ENCODE measurements at regions of chr5 and their contacts with region 1.

Region 1: DNA sequence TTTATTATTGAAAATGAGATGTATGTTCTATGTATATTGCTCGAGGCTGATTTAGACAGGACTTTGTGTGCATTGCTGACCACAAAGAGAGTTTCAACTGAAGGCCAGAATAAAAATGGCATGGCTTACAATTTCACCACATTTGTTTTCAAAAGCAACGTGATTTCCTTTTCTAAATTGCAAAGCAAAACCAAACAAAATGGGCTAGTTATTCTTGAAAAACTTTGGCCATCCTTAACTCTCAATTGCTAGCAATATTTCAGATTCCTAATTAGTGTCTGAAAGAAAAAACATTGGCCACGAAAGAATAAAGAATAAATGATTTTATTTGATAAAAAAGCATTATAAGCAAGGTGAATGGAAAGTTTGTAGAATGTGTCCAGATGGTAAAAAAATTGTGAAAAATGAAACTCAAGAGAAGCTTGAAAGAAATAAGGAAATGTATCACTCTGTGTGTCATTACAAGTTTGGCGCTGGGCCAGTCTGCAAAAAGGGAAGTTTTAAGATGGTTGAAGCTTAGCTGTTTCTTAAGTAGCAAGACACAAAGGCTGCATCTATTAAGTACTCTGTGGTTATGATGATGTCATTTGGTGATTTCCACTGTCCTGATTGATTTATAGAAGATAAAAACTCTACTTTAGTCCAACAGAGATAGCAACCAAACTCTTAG is 89.2 kb upstream of the PRLR start:
- DNase-seq: peak; percentile 44
- ATAC-seq: peak; percentile 96
- H3K4me3 Mint-ChIP-seq: peak overlapping the region; percentile 64
- H3K27ac Mint-ChIP-seq: peak overlapping the region; percentile 87
- H3K4me1 Mint-ChIP-seq: peaks cover 16% of the 10 kb centered on the region
- H3K27me3 Mint-ChIP-seq: no peaks in the 10 kb centered on the region
- CTCF ChIP-seq: no peak

Region 2: DNA sequence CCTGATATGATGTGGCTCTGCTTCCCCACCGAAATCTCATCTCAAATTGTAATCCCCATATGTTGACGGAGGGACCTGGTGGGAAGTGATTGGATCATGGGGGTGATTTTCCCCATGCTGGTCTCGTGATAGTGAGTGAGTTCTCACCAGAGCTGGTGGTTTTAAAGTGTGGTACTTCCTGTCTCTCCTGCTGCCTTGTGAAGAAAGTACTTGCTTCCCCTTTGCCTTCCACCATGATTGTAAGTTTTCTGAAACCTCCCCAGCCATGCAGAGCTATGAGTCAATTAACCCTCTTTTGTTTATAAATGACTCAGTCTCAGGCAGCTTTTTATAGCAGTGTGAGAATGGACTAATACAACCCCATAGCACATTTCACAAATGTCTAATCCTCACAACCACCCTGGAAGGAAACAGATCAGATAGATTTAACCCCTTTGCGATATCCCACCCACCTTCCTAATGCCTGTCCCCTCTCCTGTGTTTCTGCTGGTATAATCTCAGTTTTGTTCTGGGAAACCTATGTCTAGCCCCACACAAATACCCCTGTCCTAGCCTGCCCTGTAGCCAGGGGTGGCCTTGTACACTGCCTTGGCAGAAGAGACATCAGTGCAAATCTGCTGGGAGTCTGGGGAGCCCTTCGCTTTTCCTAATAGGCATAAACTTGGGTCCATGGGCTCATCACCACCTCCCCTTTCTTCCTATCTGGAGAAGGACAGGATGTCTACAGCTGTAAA is 820.3 kb before region 1 on chr5:
- CTCF ChIA-PET with region 1: no interaction called
- POLR2A ChIA-PET with region 1: no interaction called
- intact Hi-C with region 1: loop called (anchors 5 kb)
- DNase-seq: no peak
- ATAC-seq: peak; percentile 87
- H3K4me3 Mint-ChIP-seq: peak overlapping the region; percentile 48
- H3K27ac Mint-ChIP-seq: peak overlapping the region; percentile 79
- H3K4me1 Mint-ChIP-seq: peaks cover 21% of the 10 kb centered on the region
- H3K27me3 Mint-ChIP-seq: peaks cover 4% of the 10 kb centered on the region
- CTCF ChIP-seq: no peak

Region 3: DNA sequence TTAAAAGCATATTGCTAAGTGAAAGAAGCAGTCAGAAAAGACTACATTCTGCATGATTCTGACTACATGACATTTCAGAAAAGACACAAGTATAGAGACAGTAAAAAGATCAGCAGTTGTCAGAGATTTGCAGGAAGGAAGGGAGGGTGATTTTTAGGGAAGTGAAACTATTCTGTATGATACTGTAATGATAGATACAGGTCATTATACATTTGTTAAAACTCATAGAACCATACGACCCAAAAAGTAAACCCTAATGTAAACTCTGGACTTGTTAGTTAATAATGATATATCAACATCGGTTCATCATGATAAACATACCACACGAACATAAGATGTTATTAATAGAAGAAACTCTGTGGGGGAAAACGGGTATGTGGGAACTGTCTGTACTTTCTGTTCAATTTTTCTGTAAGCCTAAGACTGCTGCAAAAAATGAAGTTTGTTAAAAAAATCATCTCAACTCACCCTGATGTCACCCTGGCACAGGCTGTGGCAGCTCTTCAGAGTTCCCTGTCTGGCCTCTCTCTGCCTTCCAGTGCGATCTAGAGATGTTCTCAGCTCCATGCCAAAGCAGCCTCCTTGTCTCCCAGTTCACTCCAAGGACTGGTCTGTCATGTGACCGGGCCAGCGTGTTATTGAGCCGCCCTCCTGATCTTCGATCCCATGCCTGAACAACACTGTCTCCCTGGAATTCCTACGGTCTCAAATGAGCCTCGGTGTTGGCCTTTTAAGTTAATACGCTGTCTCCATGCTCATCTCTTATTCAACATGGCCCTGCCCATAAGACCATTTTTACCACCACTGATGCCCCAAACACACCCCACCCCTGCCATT is 124.6 kb before region 1 on chr5:
- CTCF ChIA-PET with region 1: no interaction called
- POLR2A ChIA-PET with region 1: interaction called, 3 read pairs
- intact Hi-C with region 1: loop called (anchors 1 kb)
- DNase-seq: no peak
- ATAC-seq: peak; percentile 95
- H3K4me3 Mint-ChIP-seq: peak overlapping the region; percentile 62
- H3K27ac Mint-ChIP-seq: peak overlapping the region; percentile 84
- H3K4me1 Mint-ChIP-seq: peaks cover 37% of the 10 kb centered on the region
- H3K27me3 Mint-ChIP-seq: no peaks in the 10 kb centered on the region
- CTCF ChIP-seq: no peak

Region 4: DNA sequence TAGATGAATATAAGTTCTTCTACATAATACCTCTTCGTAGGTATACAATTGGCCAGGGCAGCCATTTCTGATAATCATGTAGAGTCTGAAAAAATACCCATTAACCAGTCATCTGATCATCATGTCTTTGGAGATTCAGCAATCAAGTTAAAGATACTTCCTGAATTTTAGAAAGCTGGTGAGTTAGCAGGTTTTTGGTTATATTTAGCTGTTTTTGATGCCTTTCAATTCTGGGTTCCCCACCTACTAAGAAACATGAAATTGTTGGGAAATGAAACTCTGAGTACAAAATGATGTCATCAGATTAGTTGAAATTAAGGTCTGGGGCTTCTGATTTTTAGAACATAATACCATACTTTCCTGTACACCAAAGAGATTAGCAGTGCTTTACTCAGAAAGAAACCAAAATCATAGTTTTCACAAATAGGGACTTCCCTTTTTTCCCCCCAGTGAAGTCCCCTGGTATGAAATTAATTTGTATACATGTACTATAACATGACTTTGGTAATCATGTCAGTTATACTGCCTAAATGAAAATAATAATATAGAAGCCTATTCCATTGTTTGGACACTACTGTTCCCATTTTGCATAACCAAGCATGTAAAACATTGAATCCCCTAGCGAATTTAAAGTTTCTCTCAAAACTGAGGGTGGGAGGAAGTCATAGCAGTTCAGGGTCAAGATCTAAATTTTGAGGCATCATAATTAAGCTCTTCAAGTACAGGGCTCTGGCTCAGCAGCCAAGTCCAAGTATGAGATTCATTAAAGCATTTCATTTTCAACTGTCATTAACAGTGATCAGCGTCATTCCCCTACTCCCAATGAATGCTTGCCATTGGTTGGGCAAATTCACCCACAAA is 107.1 kb before region 1 on chr5:
- CTCF ChIA-PET with region 1: interaction called, 3 read pairs
- POLR2A ChIA-PET with region 1: interaction called, 6 read pairs
- intact Hi-C with region 1: loop called (anchors 1 kb)
- DNase-seq: no peak
- ATAC-seq: peak; percentile 86
- H3K4me3 Mint-ChIP-seq: peak overlapping the region; percentile 22
- H3K27ac Mint-ChIP-seq: peak overlapping the region; percentile 92
- H3K4me1 Mint-ChIP-seq: peaks cover 26% of the 10 kb centered on the region
- H3K27me3 Mint-ChIP-seq: peaks cover 2% of the 10 kb centered on the region
- CTCF ChIP-seq: no peak

Region 5: DNA sequence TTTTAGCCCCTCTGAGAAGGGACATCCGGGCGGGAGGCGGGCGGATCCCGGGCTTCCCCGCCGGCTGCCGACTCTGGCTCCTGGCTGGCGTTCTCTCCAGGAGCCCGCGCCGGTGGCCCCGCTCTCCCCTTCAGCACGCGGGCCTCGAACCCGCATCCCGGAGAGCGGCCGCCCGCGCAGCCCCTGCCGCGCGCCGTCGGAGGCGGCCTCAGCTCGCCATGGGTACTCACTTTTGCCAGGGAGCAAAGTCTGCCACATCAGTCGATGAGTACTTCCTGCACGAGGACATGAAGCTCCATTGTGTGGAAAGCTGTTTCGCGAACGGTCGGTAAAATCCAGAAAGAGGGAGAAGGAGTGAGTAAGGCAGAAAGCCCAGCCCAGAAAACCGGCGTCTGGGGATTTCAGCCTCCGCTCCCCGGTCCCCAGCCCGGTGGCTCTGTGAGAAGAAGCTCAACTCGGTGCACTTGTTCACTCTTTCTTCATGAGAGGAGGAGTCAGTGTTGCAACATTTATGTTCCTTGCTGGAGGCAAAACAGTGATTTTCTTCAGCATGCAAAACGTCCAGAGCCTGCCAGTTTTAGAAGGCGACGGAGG is 89.3 kb before region 1 on chr5 and contains the start of gene PRLR:
- CTCF ChIA-PET with region 1: no interaction called
- POLR2A ChIA-PET with region 1: interaction called, 14 read pairs
- intact Hi-C with region 1: loop called (anchors 1 kb)
- DNase-seq: no peak
- ATAC-seq: peak; percentile 35
- H3K4me3 Mint-ChIP-seq: peak within 1 kb of the TSS; percentile 84
- H3K27ac Mint-ChIP-seq: peak within 1 kb of the TSS; percentile 62
- H3K4me1 Mint-ChIP-seq: peaks cover 15% of the 10 kb centered on the region
- H3K27me3 Mint-ChIP-seq: peaks cover 43% of the 10 kb centered on the region
- CTCF ChIP-seq: no peak
- total RNA-seq, gene PRLR: 2.3 and 3.7 TPM in 2 replicates

Region 6: DNA sequence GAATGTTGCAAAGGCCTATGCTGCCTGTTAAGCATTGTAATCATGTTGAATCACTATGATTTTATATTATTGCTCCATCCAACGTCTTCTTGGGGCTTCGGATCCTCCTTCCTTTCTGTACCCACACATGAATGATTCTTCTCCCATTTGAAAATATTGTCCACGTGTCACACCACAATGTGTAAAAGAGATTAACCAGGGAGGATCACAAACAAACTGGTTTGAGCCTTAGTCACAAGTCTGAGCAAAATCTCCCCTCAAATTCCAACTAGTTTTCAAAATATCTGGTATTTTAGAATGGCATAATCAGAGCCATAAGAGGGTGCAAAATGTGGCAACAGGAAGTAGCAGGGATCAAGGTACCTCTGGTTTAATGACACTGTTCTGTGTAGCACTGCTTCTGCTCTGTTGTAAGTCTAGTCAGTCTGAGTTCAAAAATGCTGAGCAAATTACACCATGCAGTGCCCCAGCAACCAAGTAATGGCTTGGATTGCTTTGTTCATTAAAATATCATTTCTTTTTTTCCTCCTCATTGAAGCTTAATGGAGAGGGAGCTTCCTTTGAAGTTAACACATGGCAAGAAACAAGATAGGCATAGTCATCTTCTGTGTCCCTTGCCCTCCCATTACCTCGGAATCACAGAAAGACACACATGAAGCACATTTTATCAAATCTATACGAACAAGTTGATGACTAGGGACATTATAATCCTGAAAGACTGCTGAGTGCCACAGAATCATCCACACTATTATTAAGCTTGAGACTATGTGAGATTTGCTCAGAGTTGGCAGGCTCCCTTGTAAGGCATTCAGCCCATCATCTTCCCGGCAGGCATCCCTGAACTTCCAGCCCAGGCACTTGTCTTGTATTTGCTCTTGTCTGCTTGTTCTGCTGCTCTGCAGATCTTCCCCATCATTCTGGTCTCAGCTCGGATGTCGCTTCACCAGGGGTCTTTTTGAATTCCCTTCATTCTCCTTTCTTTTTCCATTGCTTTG is 12.8 kb after region 1 on chr5:
- CTCF ChIA-PET with region 1: no interaction called
- POLR2A ChIA-PET with region 1: no interaction called
- intact Hi-C with region 1: no loop called
- DNase-seq: no peak
- ATAC-seq: no peak
- H3K4me3 Mint-ChIP-seq: no peak overlapping the region
- H3K27ac Mint-ChIP-seq: no peak overlapping the region
- H3K4me1 Mint-ChIP-seq: no peaks in the 10 kb centered on the region
- H3K27me3 Mint-ChIP-seq: peaks cover under 1% of the 10 kb centered on the region
- CTCF ChIP-seq: no peak

Region 7: GRCh38 chr5:35393901-35394300 is 74.4 kb after region 1 on chr5:
- CTCF ChIA-PET with region 1: no interaction called
- POLR2A ChIA-PET with region 1: no interaction called
- intact Hi-C with region 1: loop called (anchors 2 kb)
- DNase-seq: no peak
- ATAC-seq: peak; percentile 49
- H3K4me3 Mint-ChIP-seq: no peak overlapping the region
- H3K27ac Mint-ChIP-seq: peak overlapping the region; percentile 16
- H3K4me1 Mint-ChIP-seq: peaks cover 7% of the 10 kb centered on the region
- H3K27me3 Mint-ChIP-seq: no peaks in the 10 kb centered on the region
- CTCF ChIP-seq: no peak

Region 8: DNA sequence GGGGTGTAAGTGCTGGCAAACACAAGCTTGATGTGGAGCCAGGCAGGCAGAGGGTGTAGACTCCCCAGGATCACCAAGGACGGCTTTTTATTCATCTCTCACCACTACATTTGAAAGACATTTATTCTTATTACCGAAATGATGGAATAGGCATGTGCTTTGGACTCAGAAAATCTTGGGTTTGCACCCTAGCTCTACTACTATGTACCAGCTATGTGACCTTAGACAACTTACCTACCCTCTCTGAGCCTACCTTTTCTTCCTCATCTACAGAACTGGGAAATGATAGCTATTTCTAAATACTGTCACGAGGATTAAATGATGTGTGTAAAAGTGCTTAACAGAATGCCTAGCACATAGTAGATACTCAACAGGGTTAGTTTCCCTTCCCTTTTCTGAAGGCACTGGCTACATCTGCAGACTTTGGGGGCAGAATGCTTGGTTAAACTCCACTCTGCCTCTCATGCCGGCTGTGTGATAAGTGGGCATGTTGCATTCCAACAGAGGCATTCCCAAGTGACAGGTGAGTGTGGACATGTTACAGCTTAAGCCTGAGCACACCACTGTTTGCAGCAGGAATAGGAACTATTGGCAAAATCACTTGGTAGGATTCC is 1381.7 kb after region 1 on chr5:
- CTCF ChIA-PET with region 1: no interaction called
- POLR2A ChIA-PET with region 1: no interaction called
- intact Hi-C with region 1: loop called (anchors 10 kb)
- DNase-seq: no peak
- ATAC-seq: peak; percentile 98
- H3K4me3 Mint-ChIP-seq: peak overlapping the region; percentile 62
- H3K27ac Mint-ChIP-seq: peak overlapping the region; percentile 82
- H3K4me1 Mint-ChIP-seq: peaks cover 29% of the 10 kb centered on the region
- H3K27me3 Mint-ChIP-seq: no peaks in the 10 kb centered on the region
- CTCF ChIP-seq: no peak

Measured in activated B cell treated with CpG ODN at 0.5 μM for 24 hours (primary cell).